ENCODE measurements at regions of chr11 and their contacts with region 1.

Region 1: DNA sequence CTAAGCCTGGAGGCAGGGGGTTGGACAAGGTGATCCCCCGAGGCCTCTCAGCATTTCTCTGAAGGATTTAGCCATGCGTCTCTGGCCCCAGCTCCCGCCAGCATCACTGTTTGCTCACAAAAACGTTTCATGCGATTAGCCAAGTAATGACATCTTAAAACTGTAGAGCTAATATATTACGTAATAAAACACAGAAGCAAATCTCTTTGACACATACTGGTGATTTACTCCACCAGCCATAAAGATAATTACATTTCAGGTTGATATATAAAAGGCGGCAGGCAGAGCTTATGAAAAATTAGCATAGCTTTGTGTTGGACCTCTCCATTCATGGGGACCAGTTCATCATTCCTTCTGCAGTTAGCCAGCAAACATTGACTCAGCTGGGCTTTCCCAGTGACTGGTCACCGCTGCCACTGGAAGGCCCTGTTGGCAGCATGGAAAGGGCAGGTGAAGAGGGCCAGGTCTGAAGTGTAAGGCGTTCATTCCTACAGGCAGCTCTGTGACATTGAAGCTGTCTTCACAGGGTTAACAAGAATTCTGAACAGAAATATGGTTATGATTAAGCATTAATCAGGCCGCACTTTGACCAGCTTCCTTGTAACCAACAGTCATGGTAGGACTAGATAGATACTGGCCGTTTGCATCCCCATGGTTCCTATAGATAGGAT is 150.3 kb downstream of the NECTIN1 start:
- DNase-seq: no peak
- H3K4me3 Mint-ChIP-seq: no peak overlapping the region
- H3K27ac Mint-ChIP-seq: no peak overlapping the region
- H3K4me1 Mint-ChIP-seq: peaks cover 14% of the 10 kb centered on the region
- H3K27me3 Mint-ChIP-seq: no peaks in the 10 kb centered on the region
- CTCF ChIP-seq: no peak

Region 2: DNA sequence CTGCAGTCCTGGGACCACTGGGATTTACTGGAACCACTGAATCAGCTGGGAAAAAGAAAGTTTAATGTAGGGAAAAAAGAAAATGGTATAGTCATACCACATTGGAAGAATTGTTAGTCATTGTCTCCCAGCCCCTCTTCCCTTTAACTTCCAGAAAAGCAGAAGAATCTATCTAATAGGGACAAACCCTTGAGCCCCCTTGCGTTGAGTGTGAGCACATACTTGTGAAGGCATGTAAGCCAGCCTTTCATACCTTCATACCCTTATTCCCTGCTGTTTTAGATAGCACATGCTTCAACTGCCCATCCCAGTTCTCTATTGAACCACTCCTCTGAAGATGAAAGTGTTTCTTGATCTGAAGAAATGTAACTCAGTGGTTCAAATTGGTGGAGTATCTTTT is 905.8 kb before region 1 on chr11:
- CTCF ChIA-PET with region 1: no interaction called
- intact Hi-C with region 1: no loop called
- DNase-seq: no peak
- H3K4me3 Mint-ChIP-seq: no peak overlapping the region
- H3K27ac Mint-ChIP-seq: no peak overlapping the region
- H3K4me1 Mint-ChIP-seq: no peaks in the 10 kb centered on the region
- H3K27me3 Mint-ChIP-seq: no peaks in the 10 kb centered on the region
- CTCF ChIP-seq: no peak

Region 3: DNA sequence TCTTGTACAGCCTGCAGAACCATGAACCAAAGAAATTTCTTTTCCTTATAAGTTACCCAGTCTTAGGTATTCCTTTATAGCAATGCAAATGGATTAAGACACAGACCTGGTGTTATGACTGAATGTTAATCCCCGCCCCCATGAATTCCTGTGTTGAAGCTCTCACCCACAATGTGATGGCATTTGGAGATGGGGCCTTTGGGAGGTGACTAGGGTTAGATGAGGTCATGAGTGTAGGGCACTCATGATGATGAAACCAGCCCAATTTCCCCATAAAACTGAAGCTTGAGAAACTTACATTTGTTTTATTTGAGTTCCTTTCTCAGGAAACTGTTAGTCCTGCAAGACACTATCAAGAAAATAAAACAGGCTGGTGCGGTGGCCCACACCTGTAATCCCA is 39.9 kb before region 1 on chr11:
- CTCF ChIA-PET with region 1: no interaction called
- intact Hi-C with region 1: no loop called
- DNase-seq: no peak
- H3K4me3 Mint-ChIP-seq: no peak overlapping the region
- H3K27ac Mint-ChIP-seq: no peak overlapping the region
- H3K4me1 Mint-ChIP-seq: peaks cover 8% of the 10 kb centered on the region
- H3K27me3 Mint-ChIP-seq: no peaks in the 10 kb centered on the region
- CTCF ChIP-seq: no peak

Region 4: DNA sequence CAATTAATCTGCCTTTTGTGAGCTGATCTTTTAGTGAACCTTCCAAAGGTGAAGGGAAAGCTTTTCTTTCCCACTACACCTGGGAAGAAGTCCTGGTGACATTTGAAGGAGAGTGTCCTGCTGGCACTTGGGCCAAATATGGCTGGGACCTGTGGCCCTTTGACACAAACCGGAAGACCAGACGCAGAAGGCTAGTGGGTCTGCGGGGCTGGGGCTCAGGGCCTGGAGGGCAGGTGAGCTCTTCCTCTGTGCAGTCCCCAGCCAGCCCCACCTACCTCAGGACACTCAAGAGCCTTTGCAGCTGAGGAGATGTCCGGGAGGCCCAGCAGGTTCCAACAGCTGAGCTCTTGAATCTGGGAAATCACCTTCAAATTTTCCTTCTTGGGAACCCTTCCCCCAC is 17.7 kb before region 1 on chr11:
- CTCF ChIA-PET with region 1: interaction called, 12 read pairs
- intact Hi-C with region 1: no loop called
- DNase-seq: no peak
- H3K4me3 Mint-ChIP-seq: no peak overlapping the region
- H3K27ac Mint-ChIP-seq: no peak overlapping the region
- H3K4me1 Mint-ChIP-seq: peaks cover 6% of the 10 kb centered on the region
- H3K27me3 Mint-ChIP-seq: no peaks in the 10 kb centered on the region
- CTCF ChIP-seq: no peak